Activated T-helper 1 cell treated with anti-CD3 and anti-CD28 coated beads, Interleukin-12 subunit alpha, Interleukin-12 subunit beta, Interleukin-2, Interleukin-4 antibody, amounts not matched to agents 30 ng/mL and 10 ng/mL and 1 ng/mL, durations not matched to agents 14 hours and 24 hours and 36 hours (primary cell): ENCODE measurements at regions of chr4 and their contacts with region 1.

Region 1: GRCh38 chr4:9999956-10000551 is 21.2 kb downstream of the SLC2A9 start:
- DNase-seq: no peak
- H3K4me3 Mint-ChIP-seq: no peak overlapping the region
- H3K27ac Mint-ChIP-seq: peak overlapping the region; percentile 49
- H3K4me1 Mint-ChIP-seq: peaks cover 49% of the 10 kb centered on the region
- H3K27me3 Mint-ChIP-seq: no peaks in the 10 kb centered on the region

Region 2: GRCh38 chr4:9812501-9813340 is 187.3 kb before region 1 on chr4:
- intact Hi-C with region 1: no loop called
- DNase-seq: peak; percentile 8
- H3K4me3 Mint-ChIP-seq: no peak overlapping the region
- H3K27ac Mint-ChIP-seq: no peak overlapping the region
- H3K4me1 Mint-ChIP-seq: peaks cover 13% of the 10 kb centered on the region
- H3K27me3 Mint-ChIP-seq: peaks cover 28% of the 10 kb centered on the region

Region 3: DNA sequence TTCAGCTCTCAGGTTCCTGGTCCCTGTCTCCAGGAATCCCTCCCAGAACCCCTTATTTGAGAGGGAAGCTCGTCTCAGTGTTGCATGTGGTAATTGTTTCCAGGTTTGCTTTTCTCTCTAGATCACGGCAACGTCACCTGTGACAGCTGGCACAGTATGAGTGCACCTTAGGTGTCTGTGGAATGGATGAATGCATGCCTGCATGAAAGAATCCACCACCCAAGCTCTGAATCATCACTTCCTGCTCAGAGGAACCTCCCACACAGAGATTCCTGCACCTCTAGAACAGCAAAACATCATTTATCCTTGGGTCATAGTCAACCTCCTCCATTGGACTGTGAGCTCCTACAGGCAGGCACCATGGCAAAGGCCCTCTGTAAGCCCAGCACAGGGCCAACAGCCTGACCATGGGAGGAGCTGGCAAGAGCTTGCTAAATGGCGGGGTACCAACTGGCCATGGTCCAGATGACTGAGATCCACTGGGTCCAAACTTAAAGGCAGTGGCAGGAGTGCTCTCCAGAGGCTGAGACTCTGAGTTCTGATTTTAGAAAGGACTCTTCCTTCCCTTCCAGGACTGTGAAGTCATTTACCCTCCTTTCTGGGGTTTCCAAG is 95.0 kb before region 1 on chr4:
- intact Hi-C with region 1: loop called (anchors 2 kb)
- DNase-seq: no peak
- H3K4me3 Mint-ChIP-seq: no peak overlapping the region
- H3K27ac Mint-ChIP-seq: peak overlapping the region; percentile 26
- H3K4me1 Mint-ChIP-seq: peaks cover 21% of the 10 kb centered on the region
- H3K27me3 Mint-ChIP-seq: peaks cover 3% of the 10 kb centered on the region

Region 4: GRCh38 chr4:9970392-9971013 is 29.6 kb before region 1 on chr4:
- intact Hi-C with region 1: loop called (anchors 1 kb)
- DNase-seq: no peak
- H3K4me3 Mint-ChIP-seq: peak overlapping the region; percentile 37
- H3K27ac Mint-ChIP-seq: peak overlapping the region; percentile 83
- H3K4me1 Mint-ChIP-seq: peaks cover 23% of the 10 kb centered on the region
- H3K27me3 Mint-ChIP-seq: peaks cover 5% of the 10 kb centered on the region